Caco-2 (cell line): ENCODE measurements at regions of chr1 and their contacts with region 1.

Region 1: DNA sequence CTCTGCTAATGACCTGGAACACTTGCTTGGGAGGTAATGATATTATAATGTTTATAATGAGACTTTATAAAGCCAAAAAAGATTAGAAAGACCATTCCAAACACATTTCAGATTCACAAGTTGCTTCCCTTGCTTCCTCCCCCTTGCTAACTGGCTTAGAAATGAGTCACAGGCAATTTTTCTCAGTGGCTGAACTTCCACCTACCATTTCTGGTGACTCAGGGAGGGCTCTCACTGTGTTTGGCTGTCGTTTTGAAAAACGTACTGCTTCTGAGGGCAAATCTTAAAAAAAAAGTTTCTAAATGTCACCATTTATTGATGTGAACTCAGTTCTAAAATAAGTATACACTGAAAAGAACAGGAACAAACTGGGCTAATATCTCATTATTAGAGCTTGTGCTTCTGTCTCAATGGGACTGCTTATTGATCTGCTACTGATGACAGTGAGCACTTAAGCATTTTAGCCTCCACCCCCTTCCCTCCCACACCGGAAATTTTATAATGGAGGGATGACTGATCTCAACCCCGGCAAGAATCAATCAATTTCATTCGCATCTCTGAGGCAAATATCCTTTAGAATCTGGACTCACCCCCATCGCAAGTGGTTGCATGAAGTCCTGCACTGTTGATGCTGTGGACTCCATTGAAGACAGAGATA is 278.3 kb downstream of the KCTD3 start:
- DNase-seq: no peak
- H3K4me3 ChIP-seq: no peak overlapping the region
- H3K4me3 Mint-ChIP-seq: no peak overlapping the region
- H3K27ac Mint-ChIP-seq: no peak overlapping the region
- H3K4me1 ChIP-seq: no peaks in the 10 kb centered on the region; the same call in 1 of the 2 replicates
- H3K4me1 Mint-ChIP-seq: no peaks in the 10 kb centered on the region
- H3K27me3 ChIP-seq: no peaks in the 10 kb centered on the region
- H3K27me3 Mint-ChIP-seq: no peaks in the 10 kb centered on the region
- CTCF ChIP-seq: no peak

Region 2: GRCh38 chr1:217193151-217193944 is 1348.0 kb after region 1 on chr1:
- CTCF ChIA-PET with region 1: no interaction called
- POLR2A ChIA-PET with region 1: interaction called, 10 read pairs
- intact Hi-C with region 1: no loop called
- DNase-seq: no peak
- H3K4me3 ChIP-seq: no peak overlapping the region
- H3K4me3 Mint-ChIP-seq: no peak overlapping the region
- H3K27ac Mint-ChIP-seq: no peak overlapping the region
- H3K4me1 ChIP-seq: no peaks in the 10 kb centered on the region
- H3K4me1 Mint-ChIP-seq: no peaks in the 10 kb centered on the region
- H3K27me3 ChIP-seq: no peaks in the 10 kb centered on the region
- H3K27me3 Mint-ChIP-seq: no peaks in the 10 kb centered on the region
- CTCF ChIP-seq: no peak